B cell (primary cell): ENCODE measurements at regions of chr1 and their contacts with region 1.

Region 1: DNA sequence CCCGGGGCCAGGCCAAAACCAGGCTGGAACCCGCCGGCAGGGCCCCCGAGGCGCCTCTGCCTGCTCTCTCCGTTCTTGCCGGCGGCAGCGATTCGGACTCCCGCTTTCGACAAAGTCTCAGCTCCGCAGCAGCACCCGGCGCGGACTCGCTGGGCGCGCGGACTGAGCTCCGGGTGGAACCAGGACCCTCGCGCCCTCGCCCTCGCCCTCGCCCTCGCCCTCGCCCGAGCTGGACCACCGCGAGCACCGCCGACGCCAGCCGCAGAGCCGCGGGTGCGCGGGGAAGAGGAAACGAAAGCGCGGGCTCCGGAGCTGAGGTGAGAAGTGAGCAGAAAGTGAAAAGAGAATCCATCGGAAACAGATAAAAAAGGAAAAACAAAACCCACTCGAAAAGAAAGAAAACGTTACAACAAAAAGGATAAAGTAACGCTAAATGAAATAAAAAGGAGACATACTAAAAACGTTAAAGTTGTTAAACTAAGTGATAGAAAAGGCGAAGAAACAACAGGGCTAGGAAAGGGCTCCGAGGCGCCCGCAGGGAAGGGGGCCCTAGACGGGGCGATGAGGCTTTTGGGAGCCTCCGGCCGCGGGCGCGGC is 64.9 kb downstream of the MEF2D start:
- DNase-seq: peak; percentile 81
- ATAC-seq: peak; percentile 58
- H3K4me3 ChIP-seq: peak overlapping the region; percentile 16 to 69 (median 41)
- H3K4me3 Mint-ChIP-seq: peak overlapping the region; percentile 87
- H3K27ac ChIP-seq: no peak overlapping the region
- H3K27ac Mint-ChIP-seq: no peak overlapping the region
- H3K4me1 ChIP-seq: peaks cover 32 to 41% of the 10 kb centered on the region in 2 donors
- H3K4me1 Mint-ChIP-seq: peaks cover 20% of the 10 kb centered on the region
- H3K27me3 ChIP-seq: peaks cover 0 to 93% (median 82%) of the 10 kb centered on the region in 4 experiments
- H3K27me3 Mint-ChIP-seq: peaks cover 82% of the 10 kb centered on the region
- CTCF ChIP-seq: no peak

Region 2: GRCh38 chr1:155078469-155079209 is 1357.0 kb before region 1 on chr1 and contains the start of gene EFNA3:
- CTCF ChIA-PET with region 1: no interaction called
- POLR2A ChIA-PET with region 1: no interaction called
- intact Hi-C with region 1: loop called (anchors 5 kb)
- DNase-seq: peak; percentile 77
- ATAC-seq: peak; percentile 69
- H3K4me3 ChIP-seq: peak within 1 kb of the TSS in 4 of 5 experiments; percentile 25 to 45 (median 40)
- H3K4me3 Mint-ChIP-seq: peak within 1 kb of the TSS; percentile 89
- H3K27ac ChIP-seq: no peak within 1 kb of the TSS
- H3K27ac Mint-ChIP-seq: peak within 1 kb of the TSS; percentile 79
- H3K4me1 ChIP-seq: peaks cover 52 to 58% of the 10 kb centered on the region in 2 donors
- H3K4me1 Mint-ChIP-seq: peaks cover 51% of the 10 kb centered on the region
- H3K27me3 ChIP-seq: peaks cover 0 to 48% (median 37%) of the 10 kb centered on the region in 4 experiments
- H3K27me3 Mint-ChIP-seq: peaks cover 27% of the 10 kb centered on the region
- CTCF ChIP-seq: no peak
- total RNA-seq, gene EFNA3: 1.6 and 3.7 TPM in 2 replicates

Region 3: GRCh38 chr1:156421062-156421938 is 14.3 kb before region 1 on chr1:
- CTCF ChIA-PET with region 1: interaction called, 9 read pairs
- POLR2A ChIA-PET with region 1: no interaction called
- intact Hi-C with region 1: loop called (anchors 2 kb)
- DNase-seq: peak; percentile 79
- ATAC-seq: peak; percentile 73
- H3K4me3 ChIP-seq: peak overlapping the region in 4 of 5 experiments; percentile 41 to 65 (median 61)
- H3K4me3 Mint-ChIP-seq: peak overlapping the region; percentile 92
- H3K27ac ChIP-seq: no peak overlapping the region
- H3K27ac Mint-ChIP-seq: peak overlapping the region; percentile 21
- H3K4me1 ChIP-seq: peaks cover 27 to 29% of the 10 kb centered on the region in 2 donors
- H3K4me1 Mint-ChIP-seq: peaks cover 28% of the 10 kb centered on the region
- H3K27me3 ChIP-seq: peaks cover 0 to 82% (median 44%) of the 10 kb centered on the region in 4 experiments
- H3K27me3 Mint-ChIP-seq: peaks cover 84% of the 10 kb centered on the region
- CTCF ChIP-seq: no peak

Region 4: DNA sequence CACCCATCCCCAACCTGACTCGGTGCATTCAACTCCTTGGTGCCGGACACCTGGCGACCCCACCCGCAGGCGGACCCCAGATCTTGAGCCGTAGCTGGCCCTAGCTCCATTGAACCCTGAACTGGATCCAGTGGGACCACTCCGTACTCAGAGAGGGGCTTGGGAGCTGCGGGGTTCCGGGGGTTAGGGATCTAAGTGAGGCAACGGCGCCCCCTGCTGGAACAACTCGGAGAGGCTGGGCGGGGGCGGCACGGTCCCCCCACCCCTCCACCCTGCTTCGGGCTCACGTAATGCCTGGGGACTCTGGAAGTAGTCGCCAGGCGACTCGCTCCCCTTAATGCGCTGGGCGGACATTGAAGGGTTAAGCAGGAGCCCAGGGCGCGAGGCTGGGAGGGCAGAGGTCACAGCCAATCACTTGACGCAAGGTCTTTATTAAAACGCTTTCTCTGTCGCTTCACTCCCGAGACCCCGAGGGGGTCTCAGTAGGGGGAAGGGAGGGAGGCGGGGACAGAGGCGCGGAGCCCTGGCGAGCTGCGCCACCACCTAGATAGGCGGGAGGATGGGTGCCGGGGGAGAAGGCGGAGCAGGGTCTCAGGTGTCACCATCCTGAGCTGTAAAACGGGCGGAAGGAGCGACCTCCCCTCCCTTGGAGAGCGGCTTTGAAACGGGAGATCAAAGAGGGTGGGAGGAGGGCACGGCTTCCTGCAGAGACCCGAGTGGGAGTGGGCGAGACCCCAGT is 270.4 kb after region 1 on chr1:
- CTCF ChIA-PET with region 1: no interaction called
- POLR2A ChIA-PET with region 1: no interaction called
- intact Hi-C with region 1: no loop called
- DNase-seq: peak; percentile 79
- ATAC-seq: peak; percentile 68
- H3K4me3 ChIP-seq: peak overlapping the region in 4 of 5 experiments; percentile 54 to 70 (median 58)
- H3K4me3 Mint-ChIP-seq: peak overlapping the region; percentile 89
- H3K27ac ChIP-seq: no peak overlapping the region
- H3K27ac Mint-ChIP-seq: no peak overlapping the region
- H3K4me1 ChIP-seq: peaks cover 28% of the 10 kb centered on the region in 2 donors
- H3K4me1 Mint-ChIP-seq: peaks cover 32% of the 10 kb centered on the region
- H3K27me3 ChIP-seq: peaks cover 3 to 51% (median 31%) of the 10 kb centered on the region in 4 experiments
- H3K27me3 Mint-ChIP-seq: peaks cover 20% of the 10 kb centered on the region
- CTCF ChIP-seq: peak; percentile 82